Heart left ventricle (tissue), 16 donors: ENCODE measurements at regions of chr3 and their contacts with region 1.

Region 1: GRCh38 chr3:193564012-193564411 is 9.3 kb upstream of the ATP13A4 start:
- DNase-seq: peak in 1 of 5 donors; percentile 28
- ATAC-seq: peak in 3 of 4 donors; percentile 66 to 72 (median 69)
- H3K4me3 ChIP-seq: no peak overlapping the region
- H3K27ac ChIP-seq: no peak overlapping the region
- H3K4me1 ChIP-seq: peaks cover 0 to 5% (median 0%) of the 10 kb centered on the region in 12 donors
- H3K27me3 ChIP-seq: no peaks in the 10 kb centered on the region
- CTCF ChIP-seq: peak in 5 of 12 donors; percentile 17 to 29 (median 23)
- POLR2A ChIP-seq: no peak

Region 2: GRCh38 chr3:193030276-193030675 is 533.7 kb before region 1 on chr3:
- intact Hi-C with region 1: loop called in 1 of 10 experiments (anchors 5 kb)
- DNase-seq: no peak
- ATAC-seq: no peak
- H3K4me3 ChIP-seq: no peak overlapping the region
- H3K27ac ChIP-seq: no peak overlapping the region
- H3K4me1 ChIP-seq: no peaks in the 10 kb centered on the region
- H3K27me3 ChIP-seq: no peaks in the 10 kb centered on the region
- CTCF ChIP-seq: no peak
- POLR2A ChIP-seq: no peak

Region 3: GRCh38 chr3:193040836-193041672 is 523.0 kb before region 1 on chr3:
- intact Hi-C with region 1: loop called in 1 of 10 experiments (anchors 10 kb)
- DNase-seq: no peak
- ATAC-seq: peak in 1 of 4 donors; percentile 46
- H3K4me3 ChIP-seq: no peak overlapping the region
- H3K27ac ChIP-seq: no peak overlapping the region
- H3K4me1 ChIP-seq: no peaks in the 10 kb centered on the region
- H3K27me3 ChIP-seq: no peaks in the 10 kb centered on the region
- CTCF ChIP-seq: peak; percentile 31 to 71 (median 57)
- POLR2A ChIP-seq: no peak

Region 4: DNA sequence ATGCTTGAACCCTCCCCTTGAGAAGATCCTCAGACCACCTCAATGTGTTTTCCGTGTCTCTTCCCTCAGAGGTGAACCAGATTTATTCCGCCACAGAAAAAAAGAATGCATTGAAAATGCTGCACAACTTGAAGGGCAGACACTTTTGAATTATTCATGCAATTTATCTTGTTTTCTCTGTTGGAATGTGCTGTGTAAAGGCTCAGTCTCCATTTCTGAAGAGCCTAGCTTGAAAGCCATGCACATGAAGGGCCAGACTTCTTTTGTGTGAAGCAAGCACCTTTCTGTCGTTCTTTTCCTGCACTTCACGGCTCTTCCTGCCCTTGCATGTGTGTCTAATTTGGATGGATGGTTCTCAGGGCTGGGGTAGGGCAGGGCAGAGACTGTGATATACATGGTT is 106.5 kb before region 1 on chr3:
- intact Hi-C with region 1: loop called in 2 of 10 experiments (anchors 5 to 10 kb)
- DNase-seq: no peak
- ATAC-seq: no peak
- H3K4me3 ChIP-seq: no peak overlapping the region
- H3K27ac ChIP-seq: no peak overlapping the region
- H3K4me1 ChIP-seq: peaks cover 0 to 7% (median 0%) of the 10 kb centered on the region in 12 donors
- H3K27me3 ChIP-seq: no peaks in the 10 kb centered on the region
- CTCF ChIP-seq: no peak
- POLR2A ChIP-seq: no peak

Region 5: GRCh38 chr3:193465992-193466608 is 97.9 kb before region 1 on chr3:
- intact Hi-C with region 1: loop called in 1 of 10 experiments (anchors 10 kb)
- DNase-seq: no peak
- ATAC-seq: no peak
- H3K4me3 ChIP-seq: no peak overlapping the region
- H3K27ac ChIP-seq: no peak overlapping the region
- H3K4me1 ChIP-seq: peaks cover 0 to 6% (median 0%) of the 10 kb centered on the region in 12 donors
- H3K27me3 ChIP-seq: no peaks in the 10 kb centered on the region
- CTCF ChIP-seq: no peak
- POLR2A ChIP-seq: no peak

Region 6: DNA sequence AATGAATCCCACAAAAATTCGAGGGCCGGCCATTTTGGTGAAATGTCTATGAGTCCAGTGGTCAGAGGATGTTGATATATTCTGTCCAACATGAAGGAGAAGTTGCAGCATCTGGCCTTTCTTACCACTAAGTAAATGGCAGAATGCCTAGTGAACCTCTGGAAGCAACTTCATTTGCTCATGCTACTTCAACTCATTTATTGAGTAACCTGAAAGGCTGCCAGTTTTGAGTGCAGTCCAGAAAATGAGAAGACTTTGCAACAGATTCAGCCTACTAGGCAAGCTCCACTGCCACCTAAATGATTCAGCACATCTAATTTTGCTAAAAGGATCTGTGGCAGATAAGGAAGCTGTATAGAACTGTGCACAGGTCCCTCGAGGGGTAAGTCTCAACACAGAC is 294.0 kb after region 1 on chr3:
- intact Hi-C with region 1: no loop called
- DNase-seq: no peak
- ATAC-seq: peak in 2 of 4 donors; percentile 33 to 55
- H3K4me3 ChIP-seq: no peak overlapping the region
- H3K27ac ChIP-seq: no peak overlapping the region
- H3K4me1 ChIP-seq: peaks cover 0 to 36% (median 12%) of the 10 kb centered on the region in 12 donors
- H3K27me3 ChIP-seq: no peaks in the 10 kb centered on the region
- CTCF ChIP-seq: no peak
- POLR2A ChIP-seq: no peak